ENCODE measurements at regions of chr18 and their contacts with region 1.

Region 1: DNA sequence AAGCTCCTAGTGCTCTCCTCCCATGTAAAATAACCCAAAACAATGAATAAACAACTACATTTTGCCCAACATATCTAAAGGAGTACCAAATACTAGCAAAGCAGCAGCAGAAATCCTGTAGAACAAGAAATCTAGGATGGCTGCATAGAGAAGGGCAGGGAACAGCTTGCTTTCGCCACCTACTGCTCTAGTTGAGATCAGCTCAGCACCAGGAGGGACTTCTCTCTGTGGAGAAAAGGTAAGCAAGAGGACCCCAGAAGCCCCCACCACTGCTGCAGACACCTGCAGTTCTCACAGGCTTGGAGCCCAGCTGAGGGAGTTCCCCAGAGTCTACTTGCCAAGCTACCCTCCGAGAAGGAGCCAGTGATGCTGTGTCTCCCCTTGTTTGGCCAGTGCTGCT is 243.0 kb upstream of the CHST9 start:
- DNase-seq: no peak
- ATAC-seq: no peak
- H3K4me3 ChIP-seq: no peak overlapping the region
- H3K4me3 Mint-ChIP-seq: no peak overlapping the region
- H3K27ac ChIP-seq: no peak overlapping the region
- H3K27ac Mint-ChIP-seq: no peak overlapping the region
- H3K4me1 ChIP-seq: no peaks in the 10 kb centered on the region
- H3K4me1 Mint-ChIP-seq: no peaks in the 10 kb centered on the region
- H3K27me3 ChIP-seq: no peaks in the 10 kb centered on the region
- H3K27me3 Mint-ChIP-seq: no peaks in the 10 kb centered on the region
- CTCF ChIP-seq: no peak

Region 2: GRCh38 chr18:27473318-27473717 is 45.2 kb after region 1 on chr18:
- CTCF ChIA-PET with region 1: no interaction called
- POLR2A ChIA-PET with region 1: no interaction called
- intact Hi-C with region 1: loop called in 1 of 2 experiments (anchors 2 kb)
- DNase-seq: no peak
- ATAC-seq: no peak
- H3K4me3 ChIP-seq: no peak overlapping the region
- H3K4me3 Mint-ChIP-seq: no peak overlapping the region
- H3K27ac ChIP-seq: no peak overlapping the region
- H3K27ac Mint-ChIP-seq: no peak overlapping the region
- H3K4me1 ChIP-seq: no peaks in the 10 kb centered on the region
- H3K4me1 Mint-ChIP-seq: no peaks in the 10 kb centered on the region
- H3K27me3 ChIP-seq: no peaks in the 10 kb centered on the region
- H3K27me3 Mint-ChIP-seq: no peaks in the 10 kb centered on the region
- CTCF ChIP-seq: no peak

Region 3: GRCh38 chr18:27627927-27628326 is 199.8 kb after region 1 on chr18:
- CTCF ChIA-PET with region 1: no interaction called
- POLR2A ChIA-PET with region 1: no interaction called
- intact Hi-C with region 1: no loop called
- DNase-seq: no peak
- ATAC-seq: no peak
- H3K4me3 ChIP-seq: no peak overlapping the region
- H3K4me3 Mint-ChIP-seq: no peak overlapping the region
- H3K27ac ChIP-seq: no peak overlapping the region
- H3K27ac Mint-ChIP-seq: no peak overlapping the region
- H3K4me1 ChIP-seq: no peaks in the 10 kb centered on the region
- H3K4me1 Mint-ChIP-seq: no peaks in the 10 kb centered on the region
- H3K27me3 ChIP-seq: no peaks in the 10 kb centered on the region
- H3K27me3 Mint-ChIP-seq: no peaks in the 10 kb centered on the region
- CTCF ChIP-seq: no peak

Region 4: DNA sequence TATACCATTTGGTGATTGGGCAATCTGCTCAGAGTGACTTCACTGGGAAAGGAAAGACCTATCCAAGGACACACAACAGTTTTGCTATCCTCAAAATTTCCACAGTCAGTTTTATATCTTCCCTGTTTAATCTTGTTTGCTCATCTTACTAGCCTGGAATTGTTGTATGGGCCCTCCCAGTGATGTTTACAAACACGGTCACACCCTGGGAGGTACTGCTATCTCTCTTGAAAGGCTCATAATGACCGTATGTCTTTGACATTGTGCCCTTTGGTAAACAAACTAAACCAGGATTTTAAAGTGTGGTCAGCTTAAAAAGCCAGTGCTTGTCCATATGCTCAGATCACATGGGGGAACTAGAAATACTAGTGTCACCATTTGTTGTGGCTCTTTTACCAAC is 471.8 kb after region 1 on chr18:
- CTCF ChIA-PET with region 1: no interaction called
- POLR2A ChIA-PET with region 1: no interaction called
- intact Hi-C with region 1: no loop called
- DNase-seq: no peak
- ATAC-seq: no peak
- H3K4me3 ChIP-seq: no peak overlapping the region
- H3K4me3 Mint-ChIP-seq: no peak overlapping the region
- H3K27ac ChIP-seq: no peak overlapping the region
- H3K27ac Mint-ChIP-seq: no peak overlapping the region
- H3K4me1 ChIP-seq: no peaks in the 10 kb centered on the region
- H3K4me1 Mint-ChIP-seq: no peaks in the 10 kb centered on the region
- H3K27me3 ChIP-seq: no peaks in the 10 kb centered on the region
- H3K27me3 Mint-ChIP-seq: no peaks in the 10 kb centered on the region
- CTCF ChIP-seq: no peak